ENCODE measurements at regions of chr5 and their contacts with region 1.

Region 1: GRCh38 chr5:142151436-142152383 is 43.1 kb downstream of the NDFIP1 start:
- DNase-seq: peak in 7 of 9 experiments; percentile 20 to 80 (median 55)
- ATAC-seq: peak; percentile 70
- H3K4me3 ChIP-seq: no peak overlapping the region
- H3K4me3 Mint-ChIP-seq: no peak overlapping the region
- H3K27ac ChIP-seq: no peak overlapping the region
- H3K27ac Mint-ChIP-seq: no peak overlapping the region
- H3K4me1 ChIP-seq: no peaks in the 10 kb centered on the region
- H3K4me1 Mint-ChIP-seq: peaks cover 11% of the 10 kb centered on the region
- H3K27me3 ChIP-seq: no peaks in the 10 kb centered on the region
- H3K27me3 Mint-ChIP-seq: no peaks in the 10 kb centered on the region
- CTCF ChIP-seq: peak; percentile 84

Region 2: GRCh38 chr5:140780512-140780911 is 1371.2 kb before region 1 on chr5:
- CTCF ChIA-PET with region 1: no interaction called
- POLR2A ChIA-PET with region 1: no interaction called
- intact Hi-C with region 1: no loop called
- DNase-seq: no peak
- ATAC-seq: no peak
- H3K4me3 ChIP-seq: no peak overlapping the region
- H3K4me3 Mint-ChIP-seq: no peak overlapping the region
- H3K27ac ChIP-seq: no peak overlapping the region
- H3K27ac Mint-ChIP-seq: no peak overlapping the region
- H3K4me1 ChIP-seq: no peaks in the 10 kb centered on the region
- H3K4me1 Mint-ChIP-seq: no peaks in the 10 kb centered on the region
- H3K27me3 ChIP-seq: peaks cover 0 to 3% of the 10 kb centered on the region in 2 experiments
- H3K27me3 Mint-ChIP-seq: peaks cover 13% of the 10 kb centered on the region
- CTCF ChIP-seq: no peak

Region 3: GRCh38 chr5:141713616-141714309 is 437.9 kb before region 1 on chr5:
- CTCF ChIA-PET with region 1: no interaction called
- POLR2A ChIA-PET with region 1: no interaction called
- intact Hi-C with region 1: no loop called
- DNase-seq: no peak
- ATAC-seq: no peak
- H3K4me3 ChIP-seq: no peak overlapping the region
- H3K4me3 Mint-ChIP-seq: no peak overlapping the region
- H3K27ac ChIP-seq: no peak overlapping the region
- H3K27ac Mint-ChIP-seq: no peak overlapping the region
- H3K4me1 ChIP-seq: no peaks in the 10 kb centered on the region
- H3K4me1 Mint-ChIP-seq: no peaks in the 10 kb centered on the region
- H3K27me3 ChIP-seq: no peaks in the 10 kb centered on the region
- H3K27me3 Mint-ChIP-seq: peaks cover 23% of the 10 kb centered on the region
- CTCF ChIP-seq: no peak

Region 4: DNA sequence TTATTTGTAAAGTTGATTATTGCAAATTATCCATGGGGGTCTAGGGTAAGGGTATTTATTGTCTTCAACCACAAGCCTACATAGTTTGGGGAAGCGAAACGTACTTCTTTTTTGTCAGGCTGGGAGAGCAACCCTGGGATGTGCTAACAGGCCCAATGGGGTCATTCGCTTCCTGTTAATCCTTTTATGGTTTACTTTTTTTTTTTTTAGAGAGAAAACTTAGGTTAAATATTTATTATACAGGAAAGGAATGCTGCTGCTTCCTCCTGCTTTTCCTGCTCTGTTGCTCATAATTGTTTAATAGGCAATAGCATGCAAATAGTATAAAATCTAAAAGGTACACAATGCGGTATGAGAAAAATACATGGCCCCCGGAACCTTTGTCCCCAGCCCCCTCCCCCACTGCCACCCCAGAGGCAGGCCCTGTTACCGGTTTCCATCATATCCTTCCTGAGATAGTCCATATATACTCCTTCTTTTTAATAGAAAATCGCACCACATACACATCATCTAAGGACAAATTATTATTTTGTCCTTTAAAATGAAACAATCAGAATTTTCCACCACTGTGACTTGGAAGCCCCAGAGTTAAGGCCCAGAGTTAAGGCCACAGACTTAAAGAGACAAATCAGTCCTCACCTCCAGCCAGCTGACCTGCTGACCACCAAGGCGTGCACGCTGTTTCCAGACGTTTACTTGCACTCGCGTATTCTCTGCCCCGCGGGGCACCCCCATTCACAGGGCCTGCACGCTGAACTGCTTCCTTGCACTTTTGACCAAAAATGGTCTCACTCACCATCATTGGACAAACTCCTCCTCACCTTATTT is 40.8 kb after region 1 on chr5:
- CTCF ChIA-PET with region 1: no interaction called
- POLR2A ChIA-PET with region 1: no interaction called
- intact Hi-C with region 1: no loop called
- DNase-seq: no peak
- ATAC-seq: no peak
- H3K4me3 ChIP-seq: no peak overlapping the region
- H3K4me3 Mint-ChIP-seq: no peak overlapping the region
- H3K27ac ChIP-seq: no peak overlapping the region
- H3K27ac Mint-ChIP-seq: no peak overlapping the region
- H3K4me1 ChIP-seq: no peaks in the 10 kb centered on the region
- H3K4me1 Mint-ChIP-seq: no peaks in the 10 kb centered on the region
- H3K27me3 ChIP-seq: no peaks in the 10 kb centered on the region
- H3K27me3 Mint-ChIP-seq: no peaks in the 10 kb centered on the region
- CTCF ChIP-seq: no peak

Region 5: DNA sequence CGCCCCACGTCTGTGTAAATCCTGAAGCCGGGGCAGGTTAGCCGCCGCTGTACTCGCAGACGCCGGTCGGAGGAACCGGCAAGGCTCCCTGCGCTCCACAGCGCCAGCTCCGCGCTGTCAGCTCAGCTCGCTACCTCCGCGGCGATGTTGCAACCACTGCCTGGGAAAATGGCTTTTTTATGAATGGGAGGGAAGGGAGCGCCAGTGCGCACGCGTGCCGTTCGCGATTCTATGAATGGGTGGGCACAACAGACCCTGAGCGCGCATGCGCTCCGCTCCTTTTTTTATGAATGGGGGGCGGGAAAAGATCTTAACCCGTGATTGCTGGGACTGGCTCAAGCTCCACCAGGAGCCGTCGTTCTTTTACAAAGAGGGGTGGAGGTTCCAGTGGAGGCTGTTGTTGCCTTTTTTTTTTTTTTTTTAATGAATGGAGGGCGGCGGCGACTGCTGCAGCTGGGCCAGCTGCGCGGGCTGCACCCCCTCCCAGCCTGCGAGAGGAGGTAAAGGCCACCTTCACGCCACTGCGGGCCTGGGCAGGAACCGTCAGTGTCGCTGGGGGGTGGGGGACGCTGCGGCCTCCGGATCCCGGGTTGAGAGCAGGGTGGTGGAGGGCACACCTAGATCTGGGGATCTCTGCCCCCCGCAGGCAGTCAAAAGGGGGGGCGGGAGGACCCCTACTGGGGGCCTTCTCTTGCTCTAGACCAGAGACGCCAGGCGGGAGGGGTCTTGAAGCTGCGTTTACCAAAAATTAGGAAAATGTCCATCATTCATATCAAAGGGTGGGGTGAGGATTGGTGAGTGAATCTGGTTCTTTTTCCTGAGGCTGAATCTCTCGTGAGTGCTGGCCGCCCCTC is 173.4 kb after region 1 on chr5 and contains the start of gene SPRY4:
- CTCF ChIA-PET with region 1: interaction called, 3 read pairs
- POLR2A ChIA-PET with region 1: no interaction called
- intact Hi-C with region 1: loop called in 1 of 2 experiments (anchors 10 kb)
- DNase-seq: peak; percentile 51 to 90 (median 80)
- ATAC-seq: peak; percentile 79
- H3K4me3 ChIP-seq: peak within 1 kb of the TSS; percentile 51 to 62
- H3K4me3 Mint-ChIP-seq: peak within 1 kb of the TSS; percentile 86
- H3K27ac ChIP-seq: no peak within 1 kb of the TSS
- H3K27ac Mint-ChIP-seq: no peak within 1 kb of the TSS
- H3K4me1 ChIP-seq: peaks cover 34% of the 10 kb centered on the region
- H3K4me1 Mint-ChIP-seq: peaks cover 26% of the 10 kb centered on the region
- H3K27me3 ChIP-seq: peaks cover 19 to 37% of the 10 kb centered on the region in 2 experiments
- H3K27me3 Mint-ChIP-seq: peaks cover 72% of the 10 kb centered on the region
- CTCF ChIP-seq: no peak
- total RNA-seq, gene SPRY4: 0.53 to 1.2 TPM

Region 6: GRCh38 chr5:142446131-142446959 is 294.6 kb after region 1 on chr5:
- CTCF ChIA-PET with region 1: no interaction called
- POLR2A ChIA-PET with region 1: no interaction called
- intact Hi-C with region 1: loop called (anchors 1 to 10 kb)
- DNase-seq: no peak
- ATAC-seq: no peak
- H3K4me3 ChIP-seq: no peak overlapping the region
- H3K4me3 Mint-ChIP-seq: no peak overlapping the region
- H3K27ac ChIP-seq: no peak overlapping the region
- H3K27ac Mint-ChIP-seq: no peak overlapping the region
- H3K4me1 ChIP-seq: peaks cover 9% of the 10 kb centered on the region
- H3K4me1 Mint-ChIP-seq: peaks cover 9% of the 10 kb centered on the region
- H3K27me3 ChIP-seq: no peaks in the 10 kb centered on the region
- H3K27me3 Mint-ChIP-seq: peaks cover 12% of the 10 kb centered on the region
- CTCF ChIP-seq: no peak

Region 7: DNA sequence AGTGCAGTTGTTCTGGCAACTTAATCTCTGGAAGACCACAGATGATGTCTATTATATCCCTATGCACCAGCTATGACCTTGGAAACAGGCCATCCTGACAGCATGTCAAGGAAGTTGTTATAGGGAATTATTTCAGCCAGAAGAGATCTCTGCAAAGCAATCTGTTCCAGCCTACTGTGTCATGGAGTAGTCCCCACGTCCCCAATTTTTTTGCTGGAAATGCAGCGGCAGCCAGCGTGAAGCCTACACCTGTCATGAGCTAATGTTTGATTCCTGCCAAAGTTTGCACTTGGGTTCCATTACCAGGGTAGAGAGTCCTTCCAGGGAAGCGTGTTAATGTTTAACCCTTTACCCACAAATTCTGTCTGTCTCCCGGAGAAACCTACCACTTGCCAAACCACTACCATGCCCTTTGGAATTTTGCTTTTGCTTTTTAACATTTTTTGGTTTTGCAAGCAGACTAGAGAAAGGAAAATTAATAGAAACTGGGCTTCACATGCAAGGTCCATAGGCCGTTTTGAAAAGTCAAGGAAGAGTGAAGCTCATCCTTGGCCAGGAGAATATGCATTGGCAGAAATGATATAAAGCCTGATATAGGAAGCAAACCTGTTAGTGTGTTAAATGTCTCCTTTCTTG is 348.0 kb after region 1 on chr5:
- CTCF ChIA-PET with region 1: no interaction called
- POLR2A ChIA-PET with region 1: no interaction called
- intact Hi-C with region 1: loop called in 1 of 2 experiments (anchors 5 kb)
- DNase-seq: no peak
- ATAC-seq: no peak
- H3K4me3 ChIP-seq: no peak overlapping the region
- H3K4me3 Mint-ChIP-seq: no peak overlapping the region
- H3K27ac ChIP-seq: no peak overlapping the region
- H3K27ac Mint-ChIP-seq: no peak overlapping the region
- H3K4me1 ChIP-seq: no peaks in the 10 kb centered on the region
- H3K4me1 Mint-ChIP-seq: no peaks in the 10 kb centered on the region
- H3K27me3 ChIP-seq: peaks cover 0 to 4% of the 10 kb centered on the region in 2 experiments
- H3K27me3 Mint-ChIP-seq: no peaks in the 10 kb centered on the region
- CTCF ChIP-seq: no peak

Region 8: GRCh38 chr5:142548739-142549275 is 397.1 kb after region 1 on chr5:
- CTCF ChIA-PET with region 1: interaction called, 6 read pairs
- POLR2A ChIA-PET with region 1: no interaction called
- intact Hi-C with region 1: loop called (anchors 1 kb)
- DNase-seq: peak in 2 of 9 experiments; percentile 41 to 46
- ATAC-seq: peak; percentile 34
- H3K4me3 ChIP-seq: no peak overlapping the region
- H3K4me3 Mint-ChIP-seq: no peak overlapping the region
- H3K27ac ChIP-seq: no peak overlapping the region
- H3K27ac Mint-ChIP-seq: no peak overlapping the region
- H3K4me1 ChIP-seq: no peaks in the 10 kb centered on the region
- H3K4me1 Mint-ChIP-seq: peaks cover 10% of the 10 kb centered on the region
- H3K27me3 ChIP-seq: peaks cover 9 to 21% of the 10 kb centered on the region in 2 experiments
- H3K27me3 Mint-ChIP-seq: peaks cover 37% of the 10 kb centered on the region
- CTCF ChIP-seq: peak; percentile 36

Region 9: DNA sequence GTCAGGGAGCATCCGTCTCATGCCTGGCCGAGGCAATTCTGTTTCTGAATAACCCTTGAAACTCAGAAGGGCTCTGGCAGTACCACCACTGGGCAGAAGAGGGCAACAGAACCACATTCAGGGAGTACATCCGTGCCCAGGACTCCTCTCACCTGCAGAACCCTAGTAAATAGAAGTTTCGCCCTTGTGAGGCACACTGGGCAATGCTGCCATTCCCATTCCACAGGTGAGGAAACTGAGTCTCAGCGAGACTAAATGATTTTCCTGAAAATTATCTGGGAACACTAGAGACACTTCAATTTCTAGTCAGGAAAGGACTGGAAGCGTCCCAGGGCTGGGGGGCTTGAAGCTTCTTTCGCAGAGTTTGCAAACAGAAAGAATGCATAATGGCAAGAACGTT is 459.4 kb after region 1 on chr5:
- CTCF ChIA-PET with region 1: interaction called, 4 read pairs
- POLR2A ChIA-PET with region 1: no interaction called
- intact Hi-C with region 1: loop called in 1 of 2 experiments (anchors 1 kb)
- DNase-seq: peak; percentile 30 to 73 (median 60)
- ATAC-seq: peak; percentile 89
- H3K4me3 ChIP-seq: no peak overlapping the region
- H3K4me3 Mint-ChIP-seq: no peak overlapping the region
- H3K27ac ChIP-seq: no peak overlapping the region
- H3K27ac Mint-ChIP-seq: no peak overlapping the region
- H3K4me1 ChIP-seq: no peaks in the 10 kb centered on the region
- H3K4me1 Mint-ChIP-seq: peaks cover 3% of the 10 kb centered on the region
- H3K27me3 ChIP-seq: no peaks in the 10 kb centered on the region
- H3K27me3 Mint-ChIP-seq: peaks cover 9% of the 10 kb centered on the region
- CTCF ChIP-seq: peak; percentile 81

Region 10: GRCh38 chr5:142881076-142881783 is 729.5 kb after region 1 on chr5:
- CTCF ChIA-PET with region 1: no interaction called
- POLR2A ChIA-PET with region 1: no interaction called
- intact Hi-C with region 1: loop called (anchors 5 kb)
- DNase-seq: peak in 1 of 9 experiments; percentile 39
- ATAC-seq: no peak
- H3K4me3 ChIP-seq: no peak overlapping the region
- H3K4me3 Mint-ChIP-seq: no peak overlapping the region
- H3K27ac ChIP-seq: no peak overlapping the region
- H3K27ac Mint-ChIP-seq: no peak overlapping the region
- H3K4me1 ChIP-seq: no peaks in the 10 kb centered on the region
- H3K4me1 Mint-ChIP-seq: peaks cover 6% of the 10 kb centered on the region
- H3K27me3 ChIP-seq: no peaks in the 10 kb centered on the region
- H3K27me3 Mint-ChIP-seq: no peaks in the 10 kb centered on the region
- CTCF ChIP-seq: no peak

Region 11: GRCh38 chr5:144121577-144121976 is 1969.9 kb after region 1 on chr5:
- CTCF ChIA-PET with region 1: no interaction called
- POLR2A ChIA-PET with region 1: no interaction called
- intact Hi-C with region 1: no loop called
- DNase-seq: no peak
- ATAC-seq: no peak
- H3K4me3 ChIP-seq: no peak overlapping the region
- H3K4me3 Mint-ChIP-seq: no peak overlapping the region
- H3K27ac ChIP-seq: no peak overlapping the region
- H3K27ac Mint-ChIP-seq: no peak overlapping the region
- H3K4me1 ChIP-seq: no peaks in the 10 kb centered on the region
- H3K4me1 Mint-ChIP-seq: no peaks in the 10 kb centered on the region
- H3K27me3 ChIP-seq: peaks cover 0 to 2% of the 10 kb centered on the region in 2 experiments
- H3K27me3 Mint-ChIP-seq: peaks cover 5% of the 10 kb centered on the region
- CTCF ChIP-seq: no peak